IMR-90 (cell line): ENCODE measurements at regions of chr20 and their contacts with region 1.

Region 1: GRCh38 chr20:9392892-9393857 is 121.2 kb upstream of the LAMP5 start:
- DNase-seq: peak; percentile 73
- ATAC-seq: peak; percentile 93
- H3K4me3 ChIP-seq: no peak overlapping the region
- H3K27ac ChIP-seq: no peak overlapping the region
- H3K4me1 ChIP-seq: peaks cover 14% of the 10 kb centered on the region
- H3K27me3 ChIP-seq: no peaks in the 10 kb centered on the region
- CTCF ChIP-seq: peak; percentile 92
- POLR2A ChIP-seq: no peak
- RAD21 ChIP-seq: peak; percentile 92

Region 2: DNA sequence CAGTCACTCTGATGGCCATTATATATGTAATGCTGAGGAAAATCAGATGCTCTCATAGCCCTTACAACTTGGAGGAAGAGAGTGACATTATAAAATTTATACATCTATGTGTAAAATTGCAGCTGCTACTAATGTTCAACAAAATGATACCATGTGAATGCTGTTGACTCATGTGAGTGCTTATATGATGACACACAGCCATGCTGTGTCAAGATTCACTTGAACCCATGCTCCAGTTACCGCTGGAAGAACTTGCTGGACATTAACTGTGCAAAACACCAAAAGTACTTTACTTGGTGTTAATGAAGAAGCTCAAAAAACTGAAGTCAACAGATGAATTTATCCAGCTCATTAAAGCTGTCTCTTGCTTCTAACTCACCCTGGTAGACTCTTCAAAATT is 643.2 kb before region 1 on chr20:
- CTCF ChIA-PET with region 1: interaction called, 7 read pairs
- POLR2A ChIA-PET with region 1: no interaction called
- dilution Hi-C with region 1: no loop called
- in situ Hi-C with region 1: no loop called
- intact Hi-C with region 1: loop called (anchors 2 kb)
- DNase-seq: peak; percentile 86
- ATAC-seq: peak; percentile 47; the same call in 1 of the 2 replicates
- H3K4me3 ChIP-seq: no peak overlapping the region
- H3K27ac ChIP-seq: no peak overlapping the region
- H3K4me1 ChIP-seq: peaks cover 3% of the 10 kb centered on the region; the same call in 1 of the 2 replicates
- H3K27me3 ChIP-seq: no peaks in the 10 kb centered on the region
- CTCF ChIP-seq: no peak
- POLR2A ChIP-seq: no peak
- RAD21 ChIP-seq: no peak

Region 3: DNA sequence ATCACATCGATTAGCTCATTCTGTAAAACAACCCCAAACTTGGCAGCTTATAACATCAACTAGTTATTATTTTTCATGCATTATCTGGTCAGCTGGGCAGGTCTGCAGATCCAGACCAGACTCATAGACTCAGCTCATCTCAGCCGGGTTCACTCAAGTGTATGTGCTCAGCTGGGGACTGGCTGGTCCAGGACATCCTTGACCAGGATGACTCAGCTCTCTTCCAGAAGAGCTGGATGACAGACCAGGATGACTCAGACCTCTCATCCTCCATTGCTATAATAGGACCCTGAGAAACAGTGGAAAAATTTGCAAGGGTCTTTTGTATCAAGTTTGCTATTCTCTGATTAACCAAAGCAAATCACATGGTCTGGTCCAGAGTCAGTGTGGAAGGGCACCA is 636.8 kb before region 1 on chr20:
- CTCF ChIA-PET with region 1: interaction called, 9 read pairs
- POLR2A ChIA-PET with region 1: no interaction called
- dilution Hi-C with region 1: no loop called
- in situ Hi-C with region 1: no loop called
- intact Hi-C with region 1: loop called (anchors 2 kb)
- DNase-seq: peak; percentile 96
- ATAC-seq: peak; percentile 82
- H3K4me3 ChIP-seq: no peak overlapping the region
- H3K27ac ChIP-seq: no peak overlapping the region
- H3K4me1 ChIP-seq: peaks cover 11% of the 10 kb centered on the region
- H3K27me3 ChIP-seq: no peaks in the 10 kb centered on the region
- CTCF ChIP-seq: no peak
- POLR2A ChIP-seq: no peak
- RAD21 ChIP-seq: no peak

Region 4: GRCh38 chr20:8790442-8791074 is 602.6 kb before region 1 on chr20:
- CTCF ChIA-PET with region 1: interaction called, 3 read pairs
- POLR2A ChIA-PET with region 1: no interaction called
- dilution Hi-C with region 1: no loop called
- in situ Hi-C with region 1: loop called (anchors 5 kb)
- intact Hi-C with region 1: loop called (anchors 1 kb)
- DNase-seq: peak; percentile 60
- ATAC-seq: peak; percentile 90
- H3K4me3 ChIP-seq: no peak overlapping the region
- H3K27ac ChIP-seq: no peak overlapping the region
- H3K4me1 ChIP-seq: no peaks in the 10 kb centered on the region
- H3K27me3 ChIP-seq: no peaks in the 10 kb centered on the region
- CTCF ChIP-seq: peak; percentile 95
- POLR2A ChIP-seq: no peak
- RAD21 ChIP-seq: peak; percentile 90

Region 5: GRCh38 chr20:9051508-9051907 is 341.7 kb before region 1 on chr20:
- CTCF ChIA-PET with region 1: no interaction called
- POLR2A ChIA-PET with region 1: no interaction called
- dilution Hi-C with region 1: no loop called
- in situ Hi-C with region 1: no loop called
- intact Hi-C with region 1: no loop called
- DNase-seq: peak; percentile 99
- ATAC-seq: peak; percentile 91
- H3K4me3 ChIP-seq: no peak overlapping the region
- H3K27ac ChIP-seq: no peak overlapping the region
- H3K4me1 ChIP-seq: peaks cover 25% of the 10 kb centered on the region
- H3K27me3 ChIP-seq: no peaks in the 10 kb centered on the region
- CTCF ChIP-seq: no peak
- POLR2A ChIP-seq: no peak
- RAD21 ChIP-seq: no peak

Region 6: GRCh38 chr20:9955646-9956045 is 562.5 kb after region 1 on chr20:
- CTCF ChIA-PET with region 1: no interaction called
- POLR2A ChIA-PET with region 1: no interaction called
- dilution Hi-C with region 1: no loop called
- in situ Hi-C with region 1: no loop called
- intact Hi-C with region 1: no loop called
- DNase-seq: no peak
- ATAC-seq: no peak
- H3K4me3 ChIP-seq: no peak overlapping the region
- H3K27ac ChIP-seq: no peak overlapping the region
- H3K4me1 ChIP-seq: no peaks in the 10 kb centered on the region
- H3K27me3 ChIP-seq: peaks cover 5% of the 10 kb centered on the region
- CTCF ChIP-seq: no peak
- POLR2A ChIP-seq: no peak
- RAD21 ChIP-seq: no peak